ENCODE measurements at regions of chr12 and their contacts with region 1.

Region 1: DNA sequence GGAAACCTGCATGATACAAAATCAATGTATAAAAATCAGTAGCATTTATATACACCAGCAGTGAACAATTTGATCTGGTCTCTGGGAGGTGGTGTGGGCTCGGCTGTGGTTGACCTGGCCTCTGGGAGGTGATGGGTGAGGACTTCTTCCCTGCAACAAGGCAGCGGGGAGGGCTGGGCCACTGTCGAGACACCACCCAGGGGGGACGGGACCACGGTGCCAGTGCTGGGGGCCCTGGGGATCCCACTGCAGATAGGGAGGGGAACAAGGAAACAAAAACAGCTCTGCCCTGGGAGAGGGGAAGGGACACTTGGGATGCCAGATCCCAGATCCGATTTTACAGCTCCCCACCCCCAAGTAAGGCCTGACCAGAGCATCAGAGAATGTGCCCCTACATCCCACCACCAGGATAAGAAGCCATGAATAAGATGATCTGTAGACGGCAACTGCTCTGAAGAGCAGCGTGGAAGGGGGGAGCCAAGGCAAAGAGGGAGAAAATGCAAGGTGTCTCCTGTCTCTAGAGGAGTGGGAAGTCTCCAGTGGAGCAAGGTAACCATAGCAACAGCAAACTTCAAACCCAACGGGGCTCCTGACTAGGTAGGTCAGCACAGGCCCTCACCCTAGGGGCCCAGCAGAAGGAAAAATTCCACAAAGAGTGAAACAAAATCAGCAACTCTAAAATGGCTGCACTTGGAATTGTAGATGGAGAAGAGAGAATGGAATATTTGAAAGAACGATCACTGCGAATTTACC is 189.4 kb upstream of the SFSWAP start:
- DNase-seq: no peak

Region 2: GRCh38 chr12:130316251-130316650 is 1205.3 kb before region 1 on chr12:
- intact Hi-C with region 1: loop called in 1 of 2 experiments (anchors 5 kb)
- DNase-seq: no peak

Region 3: DNA sequence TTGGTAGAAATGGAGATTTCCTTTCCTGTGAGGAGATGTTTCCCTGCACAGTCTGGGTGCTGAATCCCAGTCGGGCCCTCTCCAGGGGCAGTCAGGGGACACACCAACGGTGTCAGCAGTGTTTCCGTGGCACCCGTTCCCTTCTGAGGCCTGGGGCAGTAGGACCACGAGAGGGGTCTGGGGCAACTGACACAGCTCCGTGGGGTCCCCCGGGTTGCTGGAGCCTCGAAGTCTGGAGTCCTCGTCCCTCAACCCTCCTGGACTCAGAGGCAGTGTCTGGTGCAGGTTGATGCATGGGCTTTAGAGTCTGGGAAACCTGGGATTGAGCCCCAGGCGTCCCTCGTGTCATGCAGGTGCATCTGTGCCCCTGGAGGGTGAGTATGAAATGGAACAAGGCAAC is 240.5 kb before region 1 on chr12:
- intact Hi-C with region 1: loop called in 1 of 2 experiments (anchors 2 kb)
- DNase-seq: peak; percentile 66